Ascending aorta (tissue), 2 donors: ENCODE measurements at regions of chr5 and their contacts with region 1.

Region 1: GRCh38 chr5:95664204-95664786 is 17.7 kb downstream of the RFESD start:
- DNase-seq: no peak
- H3K4me3 ChIP-seq: no peak overlapping the region
- H3K27ac ChIP-seq: no peak overlapping the region
- H3K4me1 ChIP-seq: no peaks in the 10 kb centered on the region
- H3K27me3 ChIP-seq: no peaks in the 10 kb centered on the region
- CTCF ChIP-seq: peak; percentile 60 to 81 (median 68)

Region 2: GRCh38 chr5:95730730-95731570 is 66.7 kb after region 1 on chr5 and contains the start of gene RHOBTB3:
- intact Hi-C with region 1: loop called (anchors 5 kb)
- DNase-seq: peak; percentile 50 to 90
- H3K4me3 ChIP-seq: peak within 1 kb of the TSS; percentile 72 to 94
- H3K27ac ChIP-seq: peak within 1 kb of the TSS; percentile 89
- H3K4me1 ChIP-seq: peaks cover 0 to 22% of the 10 kb centered on the region in 2 donors
- H3K27me3 ChIP-seq: no peaks in the 10 kb centered on the region
- CTCF ChIP-seq: no peak
- total RNA-seq, gene RHOBTB3: 153 TPM

Region 3: DNA sequence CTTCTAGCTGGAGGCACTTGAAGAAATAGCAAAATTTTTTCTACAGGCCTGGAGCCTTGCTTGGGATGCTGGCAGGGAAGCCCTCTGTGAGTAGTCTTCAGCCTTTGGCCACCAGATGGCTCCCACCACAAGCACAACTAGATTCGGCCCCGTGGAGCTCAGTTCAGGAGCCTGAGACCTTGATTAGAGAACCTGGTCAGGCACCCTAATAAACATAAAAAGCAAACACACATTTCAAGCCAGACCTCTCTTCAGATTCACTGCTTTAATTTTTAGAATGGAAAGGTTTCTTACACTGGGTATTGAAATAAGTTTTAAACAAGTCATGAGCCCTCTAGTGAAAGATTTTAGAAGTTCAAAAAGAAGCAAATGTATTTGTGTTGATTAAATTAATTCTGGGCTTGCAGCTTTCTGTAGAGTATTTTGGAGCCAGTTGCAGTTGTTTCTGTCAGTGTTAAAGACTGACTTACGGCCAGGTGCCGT is 116.8 kb after region 1 on chr5:
- intact Hi-C with region 1: loop called (anchors 5 kb)
- DNase-seq: peak; percentile 32 to 92
- H3K4me3 ChIP-seq: no peak overlapping the region
- H3K27ac ChIP-seq: peak overlapping the region; percentile 54 to 73
- H3K4me1 ChIP-seq: peaks cover 0 to 12% of the 10 kb centered on the region in 2 donors
- H3K27me3 ChIP-seq: no peaks in the 10 kb centered on the region
- CTCF ChIP-seq: peak; percentile 87 to 89 (median 88)